ENCODE measurements at regions of chr22 and their contacts with region 1.

Region 1: GRCh38 chr22:23838681-23839468 is at the start of gene DERL3:
- DNase-seq: peak; percentile 97
- H3K4me3 Mint-ChIP-seq: peak within 1 kb of the TSS; percentile 93
- H3K27ac Mint-ChIP-seq: peak within 1 kb of the TSS; percentile 97
- H3K4me1 Mint-ChIP-seq: peaks cover 27% of the 10 kb centered on the region
- H3K27me3 Mint-ChIP-seq: peaks cover 3% of the 10 kb centered on the region
- total RNA-seq, gene DERL3: 13.8 and 18.8 TPM in 2 replicates

Region 2: GRCh38 chr22:23709107-23709506 is 129.8 kb before region 1 on chr22:
- intact Hi-C with region 1: loop called (anchors 2 kb)
- DNase-seq: no peak
- H3K4me3 Mint-ChIP-seq: no peak overlapping the region
- H3K27ac Mint-ChIP-seq: peak overlapping the region; percentile 66
- H3K4me1 Mint-ChIP-seq: peaks cover 74% of the 10 kb centered on the region
- H3K27me3 Mint-ChIP-seq: no peaks in the 10 kb centered on the region

Region 3: DNA sequence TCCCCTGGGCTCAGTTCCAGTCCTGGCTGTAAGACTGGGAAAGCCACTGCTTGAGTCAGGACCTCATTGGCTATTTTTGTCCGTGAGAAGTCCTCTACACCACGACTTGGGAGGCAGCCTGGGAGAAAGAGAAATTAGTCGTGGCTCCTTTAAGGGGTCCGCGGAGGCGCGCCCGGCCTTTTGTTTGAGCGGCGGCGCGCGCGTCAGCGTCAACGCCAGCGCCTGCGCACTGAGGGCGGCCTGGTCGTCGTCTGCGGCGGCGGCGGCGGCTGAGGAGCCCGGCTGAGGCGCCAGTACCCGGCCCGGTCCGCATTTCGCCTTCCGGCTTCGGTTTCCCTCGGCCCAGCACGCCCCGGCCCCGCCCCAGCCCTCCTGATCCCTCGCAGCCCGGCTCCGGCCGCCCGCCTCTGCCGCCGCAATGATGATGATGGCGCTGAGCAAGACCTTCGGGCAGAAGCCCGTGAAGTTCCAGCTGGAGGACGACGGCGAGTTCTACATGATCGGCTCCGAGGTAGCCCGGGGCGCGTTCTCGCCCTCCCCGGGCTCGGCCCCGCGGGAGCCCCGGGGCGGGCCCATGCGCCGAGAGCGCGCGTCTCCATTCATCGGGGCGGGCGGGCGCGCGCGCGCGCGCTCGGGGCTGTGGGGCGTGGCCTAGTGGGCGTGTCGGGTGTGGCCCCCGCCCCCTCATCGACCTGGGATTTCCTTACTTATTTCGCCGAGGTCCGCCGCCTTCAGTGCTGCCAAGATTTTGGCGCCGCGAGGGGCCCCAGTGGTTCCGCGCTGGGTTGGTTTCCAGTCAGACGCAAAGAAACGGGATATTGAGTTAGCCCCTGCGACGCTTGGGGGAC is 51.9 kb before region 1 on chr22 and contains the start of gene SMARCB1:
- intact Hi-C with region 1: loop called (anchors 1 kb)
- DNase-seq: peak; percentile 84
- H3K4me3 Mint-ChIP-seq: peak within 1 kb of the TSS; percentile 92
- H3K27ac Mint-ChIP-seq: peak within 1 kb of the TSS; percentile 92
- H3K4me1 Mint-ChIP-seq: peaks cover 34% of the 10 kb centered on the region
- H3K27me3 Mint-ChIP-seq: peaks cover 2% of the 10 kb centered on the region
- total RNA-seq, gene SMARCB1: 92.4 and 99.8 TPM in 2 replicates

Region 4: DNA sequence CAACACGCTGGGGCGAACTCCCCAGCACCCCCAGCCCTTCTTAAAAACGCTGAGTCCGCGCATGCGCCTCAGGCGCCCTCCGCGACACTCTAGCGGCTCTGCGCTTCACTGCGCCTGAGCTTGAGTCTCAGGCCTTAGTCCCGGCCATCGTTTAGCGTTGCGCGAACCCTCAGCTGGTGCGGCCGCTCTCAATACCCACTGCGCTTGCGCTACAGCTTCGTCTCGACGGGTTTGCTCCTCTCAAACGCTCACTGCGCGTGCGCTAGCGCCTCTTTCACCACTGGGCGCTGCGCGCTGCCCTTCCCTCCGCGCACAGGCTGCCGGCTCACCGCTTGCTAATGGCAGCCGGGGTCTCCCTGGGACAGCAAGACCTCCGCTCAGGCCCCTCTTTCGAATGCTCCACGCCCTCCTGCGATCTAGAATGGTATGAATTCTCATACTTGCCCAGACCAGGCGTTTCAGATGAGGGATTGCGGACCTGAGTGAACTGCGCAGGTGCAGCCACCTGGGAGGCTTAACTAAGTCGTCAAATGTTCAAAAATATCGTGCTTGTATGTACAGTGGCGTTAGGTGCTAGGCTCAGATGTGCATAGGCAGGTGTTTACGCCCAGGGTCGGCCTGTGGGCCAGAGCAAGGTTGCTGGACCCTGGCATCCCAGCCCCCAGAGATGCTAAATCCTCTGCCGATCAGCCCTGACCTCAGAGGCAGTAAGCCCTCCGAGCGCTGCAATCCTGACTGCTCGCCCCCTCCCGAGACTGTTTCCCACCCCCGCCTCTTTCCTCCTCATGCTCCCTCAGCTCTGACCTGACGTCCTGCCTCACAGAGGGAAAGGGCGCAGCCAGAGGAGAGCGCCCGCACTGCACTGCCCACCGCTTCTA is 19.0 kb after region 1 on chr22 and contains the start of gene SLC2A11:
- intact Hi-C with region 1: loop called (anchors 2 kb)
- DNase-seq: peak; percentile 93
- H3K4me3 Mint-ChIP-seq: peak within 1 kb of the TSS; percentile 88
- H3K27ac Mint-ChIP-seq: peak within 1 kb of the TSS; percentile 75
- H3K4me1 Mint-ChIP-seq: peaks cover 21% of the 10 kb centered on the region
- H3K27me3 Mint-ChIP-seq: peaks cover 4% of the 10 kb centered on the region
- total RNA-seq, gene SLC2A11: 8.3 and 8.4 TPM in 2 replicates

Measured in activated T-helper 1 cell treated with anti-CD3 and anti-CD28 coated beads, Interleukin-12 subunit alpha, Interleukin-12 subunit beta, Interleukin-2, Interleukin-4 antibody, amounts not matched to agents 30 ng/mL and 10 ng/mL and 1 ng/mL, durations not matched to agents 14 hours and 24 hours and 36 hours (primary cell).